ENCODE measurements at regions of chr3 and their contacts with region 1.

Region 1: GRCh38 chr3:20652231-20652986 is 466.4 kb upstream of the SGO1 start:
- DNase-seq: no peak
- ATAC-seq: no peak
- H3K4me3 ChIP-seq: no peak overlapping the region
- H3K27ac ChIP-seq: no peak overlapping the region
- H3K4me1 ChIP-seq: no peaks in the 10 kb centered on the region
- H3K27me3 ChIP-seq: no peaks in the 10 kb centered on the region
- CTCF ChIP-seq: no peak
- EP300 ChIP-seq: no peak
- POLR2A ChIP-seq: no peak
- RAD21 ChIP-seq: no peak

Region 2: DNA sequence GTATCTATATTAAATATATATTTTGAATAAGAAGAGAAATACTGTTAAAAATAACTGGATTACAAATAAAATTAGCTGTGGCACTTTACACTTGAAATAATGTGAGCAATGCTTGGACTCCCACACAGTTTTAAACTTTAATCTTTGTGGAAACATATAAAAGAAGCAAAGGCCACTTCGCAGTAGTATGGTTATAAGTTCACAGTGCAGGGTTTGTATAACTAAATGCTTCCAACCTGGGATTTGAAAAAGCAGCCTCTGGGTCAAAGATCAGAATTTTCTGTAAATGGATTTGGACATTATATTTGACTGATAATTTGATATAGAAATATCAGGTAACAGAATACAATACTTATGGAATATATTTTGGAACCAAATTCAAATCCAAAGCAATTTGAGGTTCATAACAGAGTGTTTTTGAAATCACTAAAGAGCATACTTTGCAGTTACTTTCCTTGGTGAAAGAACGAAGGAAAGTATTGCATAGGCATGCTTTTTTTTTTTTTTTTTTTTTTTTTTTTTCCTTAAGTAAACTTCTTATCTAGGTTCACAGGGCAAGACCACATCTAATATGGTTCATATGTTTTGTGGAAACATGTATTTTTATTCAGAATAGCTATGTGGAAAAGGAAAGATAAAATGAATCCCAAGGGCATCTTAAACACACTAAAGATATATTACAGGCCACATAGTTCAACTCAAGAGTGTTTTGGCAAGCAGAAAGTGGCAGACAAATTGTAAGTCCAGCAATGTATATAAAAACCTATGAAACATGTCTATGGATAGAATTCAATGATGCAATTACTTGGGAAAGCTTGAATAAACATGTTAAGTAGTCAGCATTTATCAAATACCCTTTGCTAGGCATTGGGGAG is 419.3 kb before region 1 on chr3:
- CTCF ChIA-PET with region 1: no interaction called
- POLR2A ChIA-PET with region 1: no interaction called
- in situ Hi-C with region 1: loop called (anchors 10 kb)
- intact Hi-C with region 1: no loop called
- DNase-seq: no peak
- ATAC-seq: no peak
- H3K4me3 ChIP-seq: no peak overlapping the region
- H3K27ac ChIP-seq: no peak overlapping the region
- H3K4me1 ChIP-seq: no peaks in the 10 kb centered on the region
- H3K27me3 ChIP-seq: no peaks in the 10 kb centered on the region
- CTCF ChIP-seq: no peak
- EP300 ChIP-seq: no peak
- POLR2A ChIP-seq: no peak
- RAD21 ChIP-seq: no peak

Region 3: GRCh38 chr3:20700714-20701113 is 48.3 kb after region 1 on chr3:
- CTCF ChIA-PET with region 1: no interaction called
- POLR2A ChIA-PET with region 1: no interaction called
- in situ Hi-C with region 1: no loop called
- intact Hi-C with region 1: no loop called
- DNase-seq: no peak
- ATAC-seq: no peak
- H3K4me3 ChIP-seq: no peak overlapping the region
- H3K27ac ChIP-seq: no peak overlapping the region
- H3K4me1 ChIP-seq: no peaks in the 10 kb centered on the region
- H3K27me3 ChIP-seq: no peaks in the 10 kb centered on the region
- CTCF ChIP-seq: no peak
- EP300 ChIP-seq: no peak
- POLR2A ChIP-seq: no peak
- RAD21 ChIP-seq: no peak

Measured in K562 (cell line).